Activated naive CD4-positive, alpha-beta T cell treated with anti-CD3 and anti-CD28 coated beads for 36 hours (primary cell): ENCODE measurements at regions of chr2 and their contacts with region 1.

Region 1: DNA sequence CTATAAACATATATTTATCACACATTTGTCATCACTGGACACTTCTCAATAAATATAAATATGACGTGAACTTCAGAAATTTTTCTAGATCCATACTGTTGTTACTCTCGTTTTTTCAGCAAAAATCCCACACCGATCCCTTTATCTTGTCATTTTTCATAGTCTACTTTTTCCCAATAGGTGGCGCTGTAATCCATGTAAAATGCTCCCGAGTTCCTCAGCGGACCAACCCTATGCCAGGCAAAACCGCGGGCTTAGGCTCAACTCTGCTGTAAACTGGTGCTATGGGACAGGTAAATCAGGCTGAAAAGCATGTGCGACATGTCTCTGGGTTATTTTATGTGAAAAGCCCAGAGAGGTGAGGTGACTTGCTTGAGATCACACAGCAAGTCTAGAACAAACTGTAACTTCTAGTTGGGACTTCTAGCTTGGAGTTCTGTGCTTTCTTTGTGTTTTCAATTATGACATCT is 104.0 kb downstream of the COBLL1 start:
- DNase-seq: peak; percentile 38
- H3K4me3 Mint-ChIP-seq: no peak overlapping the region
- H3K27ac Mint-ChIP-seq: no peak overlapping the region
- H3K4me1 Mint-ChIP-seq: no peaks in the 10 kb centered on the region
- H3K27me3 Mint-ChIP-seq: no peaks in the 10 kb centered on the region

Region 2: DNA sequence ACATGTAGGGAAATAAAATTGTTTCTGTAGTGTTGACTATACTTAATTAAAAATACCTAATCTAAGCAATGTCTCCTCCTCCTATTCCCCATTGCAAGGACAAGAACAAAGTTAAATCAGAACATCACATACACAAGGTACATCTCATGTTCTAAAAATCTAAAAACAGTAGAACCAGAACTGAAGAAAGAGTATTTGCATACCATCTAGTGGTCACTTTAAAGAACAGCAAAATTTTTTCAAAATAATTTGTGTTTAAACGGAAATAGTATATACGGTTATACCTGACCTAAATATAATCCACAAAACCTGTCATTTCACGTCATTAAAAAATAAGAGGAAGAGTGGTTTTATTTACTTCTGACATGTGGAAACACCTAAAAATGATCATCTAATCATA is 1604.8 kb before region 1 on chr2:
- CTCF ChIA-PET with region 1: no interaction called
- intact Hi-C with region 1: no loop called
- DNase-seq: no peak
- H3K4me3 Mint-ChIP-seq: no peak overlapping the region
- H3K27ac Mint-ChIP-seq: no peak overlapping the region
- H3K4me1 Mint-ChIP-seq: no peaks in the 10 kb centered on the region
- H3K27me3 Mint-ChIP-seq: no peaks in the 10 kb centered on the region

Region 3: GRCh38 chr2:163970058-163970813 is 767.4 kb before region 1 on chr2:
- CTCF ChIA-PET with region 1: no interaction called
- intact Hi-C with region 1: no loop called
- DNase-seq: no peak
- H3K4me3 Mint-ChIP-seq: no peak overlapping the region
- H3K27ac Mint-ChIP-seq: no peak overlapping the region
- H3K4me1 Mint-ChIP-seq: no peaks in the 10 kb centered on the region
- H3K27me3 Mint-ChIP-seq: no peaks in the 10 kb centered on the region

Region 4: GRCh38 chr2:164363646-164364045 is 374.0 kb before region 1 on chr2:
- CTCF ChIA-PET with region 1: no interaction called
- intact Hi-C with region 1: no loop called
- DNase-seq: no peak
- H3K4me3 Mint-ChIP-seq: no peak overlapping the region
- H3K27ac Mint-ChIP-seq: no peak overlapping the region
- H3K4me1 Mint-ChIP-seq: no peaks in the 10 kb centered on the region
- H3K27me3 Mint-ChIP-seq: no peaks in the 10 kb centered on the region

Region 5: GRCh38 chr2:164697674-164698461 is 39.8 kb before region 1 on chr2:
- CTCF ChIA-PET with region 1: no interaction called
- intact Hi-C with region 1: no loop called
- DNase-seq: no peak
- H3K4me3 Mint-ChIP-seq: no peak overlapping the region
- H3K27ac Mint-ChIP-seq: no peak overlapping the region
- H3K4me1 Mint-ChIP-seq: no peaks in the 10 kb centered on the region
- H3K27me3 Mint-ChIP-seq: no peaks in the 10 kb centered on the region

Region 6: GRCh38 chr2:164761740-164762460 is 24.3 kb after region 1 on chr2:
- CTCF ChIA-PET with region 1: no interaction called
- intact Hi-C with region 1: loop called (anchors 1 kb)
- DNase-seq: no peak
- H3K4me3 Mint-ChIP-seq: no peak overlapping the region
- H3K27ac Mint-ChIP-seq: no peak overlapping the region
- H3K4me1 Mint-ChIP-seq: peaks cover 5% of the 10 kb centered on the region
- H3K27me3 Mint-ChIP-seq: no peaks in the 10 kb centered on the region

Region 7: GRCh38 chr2:164910101-164910899 is 172.7 kb after region 1 on chr2:
- CTCF ChIA-PET with region 1: no interaction called
- intact Hi-C with region 1: loop called (anchors 1 kb)
- DNase-seq: peak; percentile 60
- H3K4me3 Mint-ChIP-seq: no peak overlapping the region
- H3K27ac Mint-ChIP-seq: no peak overlapping the region
- H3K4me1 Mint-ChIP-seq: peaks cover 3% of the 10 kb centered on the region
- H3K27me3 Mint-ChIP-seq: peaks cover 6% of the 10 kb centered on the region

Region 8: DNA sequence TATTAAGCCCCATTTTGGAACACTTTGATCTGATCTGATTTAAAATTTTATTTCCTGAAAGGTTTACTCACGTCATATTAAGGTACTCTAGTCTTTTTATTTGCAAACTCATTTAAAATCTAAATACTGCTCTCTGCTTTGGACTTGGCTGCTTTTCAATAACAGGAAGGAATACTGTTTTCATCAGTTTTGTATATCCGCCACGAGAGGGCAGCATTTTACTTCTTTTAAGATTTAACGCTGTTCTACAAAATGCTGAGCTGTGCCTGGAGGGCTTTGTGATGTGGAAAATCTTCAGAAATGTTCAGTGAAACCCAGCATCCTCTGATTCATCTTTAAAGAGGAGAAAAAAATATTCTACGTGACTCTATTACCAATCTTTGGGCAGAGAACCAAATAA is 255.2 kb after region 1 on chr2:
- CTCF ChIA-PET with region 1: no interaction called
- intact Hi-C with region 1: loop called (anchors 2 kb)
- DNase-seq: peak; percentile 64
- H3K4me3 Mint-ChIP-seq: no peak overlapping the region
- H3K27ac Mint-ChIP-seq: no peak overlapping the region
- H3K4me1 Mint-ChIP-seq: peaks cover 11% of the 10 kb centered on the region
- H3K27me3 Mint-ChIP-seq: no peaks in the 10 kb centered on the region

Region 9: DNA sequence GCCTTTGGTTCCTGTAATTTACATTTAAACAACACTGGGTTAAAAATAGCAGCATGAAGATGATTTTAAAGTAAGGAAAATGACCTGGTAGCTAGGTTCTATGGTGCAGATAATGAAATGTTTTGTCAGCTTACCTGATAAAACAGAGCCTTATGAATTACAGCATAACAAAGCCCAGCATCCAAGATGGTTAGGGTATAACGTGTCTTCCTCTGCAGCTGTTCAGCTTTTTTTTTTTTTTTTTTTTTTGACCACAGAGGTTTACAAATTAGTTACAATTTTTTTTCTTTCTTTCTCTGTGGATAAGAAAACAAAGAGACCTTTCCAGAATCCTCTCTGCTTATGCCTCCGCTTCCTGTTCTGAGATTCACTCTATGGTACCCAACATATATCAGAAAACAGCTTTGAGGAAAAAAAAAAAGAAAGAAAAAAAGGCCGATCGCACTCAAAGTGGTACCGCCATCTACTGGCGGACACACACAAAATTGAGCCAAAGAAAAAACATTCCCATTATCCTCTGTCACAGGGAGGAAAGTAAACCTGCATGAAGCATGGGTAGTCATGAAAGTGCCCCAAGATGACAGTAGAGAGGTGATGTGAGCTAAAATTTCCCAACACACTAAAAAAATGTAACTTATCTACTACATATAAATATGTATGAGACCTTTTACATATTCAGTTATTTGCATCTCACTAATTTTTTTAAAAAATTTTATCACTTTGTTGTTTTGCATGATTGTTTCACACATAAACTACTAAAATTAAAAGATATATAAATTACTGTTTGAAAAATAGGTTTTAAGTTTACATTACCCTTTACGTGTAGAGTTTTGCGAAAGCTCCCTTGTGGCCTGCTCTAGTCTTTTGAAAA is 466.3 kb after region 1 on chr2 and contains the start of gene SCN3A:
- CTCF ChIA-PET with region 1: no interaction called
- intact Hi-C with region 1: loop called (anchors 1 kb)
- DNase-seq: peak; percentile 18
- H3K4me3 Mint-ChIP-seq: peak within 1 kb of the TSS; percentile 11
- H3K27ac Mint-ChIP-seq: no peak within 1 kb of the TSS
- H3K4me1 Mint-ChIP-seq: peaks cover 3% of the 10 kb centered on the region
- H3K27me3 Mint-ChIP-seq: peaks cover 9% of the 10 kb centered on the region
- total RNA-seq, gene SCN3A: 0.10 to 0.12 TPM